ENCODE measurements at regions of chr12 and their contacts with region 1.

Region 1: GRCh38 chr12:96035278-96036236 is at the start of gene LTA4H:
- DNase-seq: peak; percentile 93
- H3K4me3 Mint-ChIP-seq: no peak within 1 kb of the TSS
- H3K27ac Mint-ChIP-seq: no peak within 1 kb of the TSS
- H3K4me1 Mint-ChIP-seq: peaks cover 10% of the 10 kb centered on the region
- H3K27me3 Mint-ChIP-seq: no peaks in the 10 kb centered on the region
- total RNA-seq, gene LTA4H: 57.3 and 59.6 TPM in 2 replicates

Region 2: GRCh38 chr12:95003213-95003920 is 1032.2 kb before region 1 on chr12 and contains the start of gene NDUFA12:
- intact Hi-C with region 1: loop called (anchors 5 kb)
- DNase-seq: peak; percentile 94
- H3K4me3 Mint-ChIP-seq: peak within 1 kb of the TSS; percentile 95
- H3K27ac Mint-ChIP-seq: peak within 1 kb of the TSS; percentile 93
- H3K4me1 Mint-ChIP-seq: peaks cover 30% of the 10 kb centered on the region
- H3K27me3 Mint-ChIP-seq: no peaks in the 10 kb centered on the region
- total RNA-seq, gene NDUFA12: 113 TPM in 2 replicates

Region 3: DNA sequence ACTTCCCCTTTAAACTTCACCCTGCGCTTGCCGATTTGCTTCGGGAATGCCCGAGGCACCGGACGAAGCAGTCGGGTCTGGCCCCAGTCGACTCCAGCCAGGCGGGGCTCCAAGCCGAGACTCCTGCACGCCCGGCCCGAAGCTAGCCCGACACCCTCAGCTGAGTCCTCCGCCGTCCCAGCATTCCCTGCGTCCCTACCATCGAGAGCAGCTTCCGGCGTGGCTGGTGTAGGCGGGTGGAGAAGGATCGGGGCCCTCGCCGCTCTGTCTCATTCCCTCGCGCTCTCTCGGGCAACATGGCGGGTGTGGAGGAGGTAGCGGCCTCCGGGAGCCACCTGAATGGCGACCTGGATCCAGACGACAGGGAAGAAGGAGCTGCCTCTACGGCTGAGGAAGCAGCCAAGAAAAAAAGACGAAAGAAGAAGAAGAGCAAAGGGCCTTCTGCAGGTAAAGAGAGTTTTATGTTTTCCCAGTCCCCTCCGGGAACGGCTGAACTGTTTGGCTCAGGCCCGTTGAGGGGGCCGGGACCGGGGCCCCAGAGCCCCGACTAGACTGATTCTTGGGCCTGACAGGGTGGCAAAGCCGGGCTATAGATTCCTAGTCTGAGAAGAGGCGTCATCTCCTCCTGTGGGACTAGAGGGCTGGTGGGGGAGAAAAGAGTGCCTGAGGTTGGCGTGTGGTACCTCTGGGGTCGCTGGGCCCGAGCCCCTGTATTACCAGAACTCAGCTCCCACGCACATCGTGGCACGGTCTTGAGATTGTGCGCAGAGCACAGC is 561.5 kb before region 1 on chr12 and contains the start of gene METAP2:
- intact Hi-C with region 1: loop called (anchors 1 kb)
- DNase-seq: peak; percentile 86
- H3K4me3 Mint-ChIP-seq: peak within 1 kb of the TSS; percentile 100
- H3K27ac Mint-ChIP-seq: peak within 1 kb of the TSS; percentile 100
- H3K4me1 Mint-ChIP-seq: peaks cover 46% of the 10 kb centered on the region
- H3K27me3 Mint-ChIP-seq: no peaks in the 10 kb centered on the region
- total RNA-seq, gene METAP2: 118 and 121 TPM in 2 replicates

Region 4: GRCh38 chr12:95802482-95803264 is 232.9 kb before region 1 on chr12:
- intact Hi-C with region 1: no loop called
- DNase-seq: no peak
- H3K4me3 Mint-ChIP-seq: no peak overlapping the region
- H3K27ac Mint-ChIP-seq: no peak overlapping the region
- H3K4me1 Mint-ChIP-seq: no peaks in the 10 kb centered on the region
- H3K27me3 Mint-ChIP-seq: peaks cover 19% of the 10 kb centered on the region

Region 5: DNA sequence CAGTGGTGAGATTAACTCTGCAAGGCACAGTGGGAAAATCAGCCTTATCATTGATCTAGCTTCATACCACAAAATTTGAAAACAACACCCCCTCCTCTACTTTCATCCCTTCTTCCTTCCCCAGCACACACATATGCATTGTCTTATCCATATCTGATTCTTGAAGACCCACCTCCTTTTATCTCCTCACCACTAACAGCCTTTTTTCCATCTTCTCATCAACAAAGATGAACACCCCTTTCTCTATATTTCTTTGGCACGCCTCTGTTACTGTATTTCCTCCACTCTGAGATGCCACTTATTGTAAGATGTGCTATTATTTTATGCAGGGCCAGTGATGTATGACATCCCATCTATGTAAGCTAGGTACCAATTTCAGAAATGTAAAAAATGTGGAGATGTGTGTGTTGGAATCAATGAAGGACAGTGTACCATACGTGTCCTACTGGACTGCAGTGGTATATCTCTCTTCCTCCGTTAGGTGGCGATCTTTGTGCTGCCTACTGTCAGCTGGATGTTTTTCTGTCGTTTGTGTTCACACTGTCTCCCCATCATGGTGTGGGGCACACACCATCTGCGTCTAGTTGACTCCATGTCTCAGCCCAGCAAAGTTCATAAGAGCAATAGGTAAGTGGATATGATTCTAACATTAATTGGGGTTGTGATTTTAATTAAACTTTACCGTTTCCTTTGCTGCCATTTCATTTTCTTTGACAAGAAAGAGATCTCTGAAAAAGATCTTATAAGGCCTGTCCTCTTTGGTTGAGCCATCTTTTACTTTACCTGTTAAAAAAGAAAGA is 117.2 kb before region 1 on chr12:
- intact Hi-C with region 1: loop called (anchors 1 kb)
- DNase-seq: peak; percentile 17
- H3K4me3 Mint-ChIP-seq: no peak overlapping the region
- H3K27ac Mint-ChIP-seq: no peak overlapping the region
- H3K4me1 Mint-ChIP-seq: no peaks in the 10 kb centered on the region
- H3K27me3 Mint-ChIP-seq: peaks cover 20% of the 10 kb centered on the region

Region 6: DNA sequence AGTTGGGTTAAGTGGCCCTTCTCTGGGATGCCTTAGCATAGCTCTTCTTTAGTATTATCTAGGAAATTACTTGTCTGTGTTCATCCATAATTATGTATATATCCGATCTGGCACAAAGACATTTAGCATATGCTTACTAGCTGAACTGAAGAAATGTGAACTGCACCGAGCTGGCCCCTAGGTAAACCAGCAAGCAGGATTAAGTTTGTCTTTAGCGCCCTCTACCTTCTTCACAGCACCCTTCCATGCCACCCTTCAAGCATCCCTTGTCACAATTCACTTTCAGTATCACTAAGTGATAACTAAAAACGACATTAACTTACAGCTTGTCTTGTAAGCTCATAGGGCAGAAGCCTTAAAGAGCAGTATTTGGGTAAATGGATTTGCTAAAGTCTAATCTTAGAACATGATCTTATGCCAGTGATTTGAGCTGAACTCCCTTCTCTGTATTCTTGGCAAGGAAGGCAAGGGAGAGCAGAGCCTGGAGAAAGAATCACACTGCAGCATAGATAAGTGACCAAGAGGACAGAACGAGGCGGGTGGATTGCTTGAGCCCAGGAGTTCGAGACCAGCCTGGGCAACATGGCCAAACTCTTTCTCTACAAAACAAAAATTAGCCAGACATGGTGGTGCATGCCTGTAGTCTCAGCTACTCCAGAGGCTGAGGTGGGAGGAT is 36.8 kb before region 1 on chr12:
- intact Hi-C with region 1: loop called (anchors 2 kb)
- DNase-seq: peak; percentile 42
- H3K4me3 Mint-ChIP-seq: no peak overlapping the region
- H3K27ac Mint-ChIP-seq: peak overlapping the region; percentile 20
- H3K4me1 Mint-ChIP-seq: peaks cover 18% of the 10 kb centered on the region
- H3K27me3 Mint-ChIP-seq: no peaks in the 10 kb centered on the region

Region 7: GRCh38 chr12:96061864-96062453 is 26.4 kb after region 1 on chr12:
- intact Hi-C with region 1: no loop called
- DNase-seq: peak; percentile 58
- H3K4me3 Mint-ChIP-seq: no peak overlapping the region
- H3K27ac Mint-ChIP-seq: no peak overlapping the region
- H3K4me1 Mint-ChIP-seq: peaks cover 27% of the 10 kb centered on the region
- H3K27me3 Mint-ChIP-seq: no peaks in the 10 kb centered on the region

Region 8: DNA sequence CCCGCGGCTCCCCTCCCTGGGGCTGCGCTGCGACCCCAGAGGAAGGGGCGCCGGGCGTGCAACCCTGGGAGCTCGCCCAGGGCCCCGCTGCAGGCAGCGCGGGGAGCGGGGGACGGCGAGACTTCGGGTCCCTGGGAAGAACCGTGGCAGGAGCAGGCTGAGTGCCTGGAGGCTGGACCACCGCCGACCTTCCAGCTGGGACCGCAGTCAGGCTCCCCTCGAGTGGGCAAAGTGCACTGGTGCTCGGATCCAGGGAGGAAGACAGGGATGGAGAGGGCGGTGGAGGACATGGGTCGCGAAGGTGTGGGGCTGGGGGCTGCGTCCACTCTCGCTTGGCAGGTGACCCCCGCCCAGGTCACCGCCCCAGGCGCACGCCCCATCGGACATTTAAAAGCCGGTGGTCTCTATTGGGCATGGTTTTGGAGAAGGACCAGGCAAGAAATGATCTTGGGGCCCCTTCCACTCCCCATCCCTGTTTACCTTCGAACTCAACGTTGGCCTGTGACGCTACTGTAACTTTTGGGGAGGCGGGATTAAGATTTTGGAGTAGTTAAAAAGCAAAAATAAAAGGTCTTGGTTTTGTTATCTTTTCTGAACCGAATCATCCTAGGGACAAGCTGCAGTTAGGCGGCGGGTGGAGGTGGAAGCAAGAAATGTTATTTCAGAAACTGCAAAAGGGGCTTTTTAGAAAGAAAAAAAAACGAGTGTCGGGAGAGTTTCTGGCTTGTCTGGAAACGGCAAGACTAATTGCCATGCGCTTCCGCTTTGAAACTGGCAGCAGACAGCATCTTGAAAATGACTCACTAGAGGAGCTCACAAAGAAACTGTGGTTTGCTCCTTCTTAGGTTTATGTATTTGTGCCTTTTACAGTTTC is 159.7 kb after region 1 on chr12:
- intact Hi-C with region 1: loop called (anchors 1 kb)
- DNase-seq: peak; percentile 68
- H3K4me3 Mint-ChIP-seq: peak overlapping the region; percentile 96
- H3K27ac Mint-ChIP-seq: peak overlapping the region; percentile 98
- H3K4me1 Mint-ChIP-seq: peaks cover 49% of the 10 kb centered on the region
- H3K27me3 Mint-ChIP-seq: no peaks in the 10 kb centered on the region